ENCODE measurements at regions of chr11 and their contacts with region 1.

Region 1: DNA sequence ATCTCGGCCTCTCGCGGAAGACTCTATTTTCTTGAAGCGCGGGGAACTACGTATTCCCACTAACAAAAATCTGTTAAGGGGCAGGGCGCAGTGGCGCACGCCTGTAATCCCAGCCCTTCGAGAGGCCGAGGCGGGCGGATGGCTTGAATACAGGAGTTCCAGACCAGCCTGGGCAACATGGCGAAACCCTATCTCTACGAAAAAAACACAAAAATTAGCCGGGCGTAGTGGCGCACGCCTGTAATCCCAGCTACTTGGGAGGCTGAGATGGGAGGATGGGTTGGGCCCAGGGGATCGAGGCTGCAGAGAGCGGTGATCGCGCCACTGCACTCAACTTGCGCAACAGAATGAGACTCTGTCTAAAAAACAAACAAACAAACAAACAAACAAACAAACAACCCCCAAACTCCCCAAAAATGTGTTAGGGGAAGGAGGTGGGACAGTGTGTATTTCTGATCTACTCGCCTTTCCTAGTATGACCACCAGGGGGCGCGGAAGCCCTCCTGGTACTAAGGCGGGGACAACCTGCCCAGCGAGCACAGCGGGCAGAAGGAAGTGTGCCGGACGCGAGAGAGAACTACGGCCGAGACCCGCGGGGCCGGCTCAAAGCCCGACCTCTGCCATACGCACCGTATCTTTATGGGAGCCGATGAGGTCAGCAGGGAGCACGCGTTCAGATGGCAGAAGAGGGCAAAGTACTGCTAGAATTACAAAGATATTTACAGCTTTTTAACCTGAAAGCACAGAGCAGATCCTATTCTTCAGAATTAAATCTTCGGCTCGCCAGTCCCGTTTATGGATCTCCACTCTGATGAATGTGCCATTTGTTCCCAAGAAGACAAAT is 1.3 kb upstream of the STX3 start:
- DNase-seq: peak; percentile 90
- ATAC-seq: peak; percentile 26
- H3K4me3 ChIP-seq: peak overlapping the region; percentile 92
- H3K27ac ChIP-seq: no peak overlapping the region
- H3K4me1 ChIP-seq: peaks cover 20% of the 10 kb centered on the region
- H3K27me3 ChIP-seq: no peaks in the 10 kb centered on the region
- CTCF ChIP-seq: peak; percentile 96

Region 2: DNA sequence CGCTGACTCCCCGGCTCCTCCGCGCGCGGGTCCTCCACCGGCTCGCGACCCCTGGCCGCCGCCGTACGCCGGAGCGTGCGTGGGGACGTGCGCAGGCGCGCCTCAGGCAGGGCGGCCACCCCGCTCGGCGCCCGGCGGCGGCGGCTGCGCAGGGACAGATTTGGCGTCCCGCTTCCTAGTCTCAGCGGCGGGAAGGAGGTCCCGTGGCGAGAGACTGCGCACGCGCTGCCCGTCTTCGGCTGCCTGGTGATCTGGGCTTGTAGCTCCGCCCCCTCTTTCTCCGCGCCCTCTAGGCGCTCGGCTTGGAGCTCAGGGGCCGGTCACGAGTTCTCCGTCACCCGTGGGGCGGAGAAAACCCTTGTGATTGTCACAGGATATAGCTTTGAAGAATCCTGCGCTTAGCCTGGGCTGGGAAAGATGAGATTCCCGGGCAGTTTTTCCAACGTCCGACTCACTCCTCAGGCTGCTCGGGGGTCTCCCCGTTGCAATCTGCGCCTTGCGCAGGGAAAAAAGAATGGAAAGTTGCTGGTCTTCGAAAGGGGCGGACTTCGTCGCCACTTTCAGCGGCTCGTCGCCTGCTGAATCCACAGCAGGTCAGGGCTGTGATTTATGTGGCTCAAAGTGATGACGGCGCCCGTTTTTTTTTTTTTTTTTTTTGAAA is 84.8 kb before region 1 on chr11 and contains the start of gene PATL1:
- CTCF ChIA-PET with region 1: no interaction called
- POLR2A ChIA-PET with region 1: interaction called, 3 read pairs
- intact Hi-C with region 1: loop called (anchors 2 kb)
- DNase-seq: peak; percentile 99
- ATAC-seq: peak; percentile 95
- H3K4me3 ChIP-seq: peak within 1 kb of the TSS; percentile 77
- H3K27ac ChIP-seq: peak within 1 kb of the TSS; percentile 74
- H3K4me1 ChIP-seq: peaks cover 21% of the 10 kb centered on the region
- H3K27me3 ChIP-seq: no peaks in the 10 kb centered on the region
- CTCF ChIP-seq: no peak
- total RNA-seq, gene PATL1: 18.1 and 23.1 TPM in 2 replicates

Region 3: DNA sequence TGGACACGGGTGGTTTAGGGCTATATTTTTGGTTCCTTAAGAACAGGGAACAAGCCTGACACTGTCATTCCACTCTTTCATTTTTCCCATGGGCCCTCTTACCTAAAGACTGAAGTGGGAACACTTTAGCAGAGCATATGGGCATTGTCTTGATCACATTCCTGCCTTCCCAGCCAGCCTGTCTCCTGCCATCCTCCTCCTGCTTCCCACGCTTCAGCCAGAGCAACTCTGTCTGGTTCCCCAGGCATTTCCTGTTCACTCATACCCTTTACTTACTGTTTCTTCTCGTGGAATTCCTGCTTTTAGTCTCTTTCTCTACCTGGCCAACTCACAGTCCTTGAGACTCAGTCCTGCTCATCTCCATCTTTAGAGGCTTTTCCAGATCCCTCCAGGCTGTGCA is 33.9 kb after region 1 on chr11:
- CTCF ChIA-PET with region 1: interaction called, 4 read pairs
- POLR2A ChIA-PET with region 1: interaction called, 5 read pairs
- intact Hi-C with region 1: loop called (anchors 1 kb)
- DNase-seq: peak; percentile 23
- ATAC-seq: no peak
- H3K4me3 ChIP-seq: peak overlapping the region; percentile 27; the same call in 1 of the 2 replicates
- H3K27ac ChIP-seq: peak overlapping the region; percentile 91
- H3K4me1 ChIP-seq: peaks cover 31% of the 10 kb centered on the region
- H3K27me3 ChIP-seq: no peaks in the 10 kb centered on the region
- CTCF ChIP-seq: no peak

Region 4: GRCh38 chr11:59810189-59810910 is 56.5 kb after region 1 on chr11 and contains the start of gene MRPL16:
- CTCF ChIA-PET with region 1: interaction called, 3 read pairs
- POLR2A ChIA-PET with region 1: no interaction called
- intact Hi-C with region 1: loop called (anchors 2 kb)
- DNase-seq: peak; percentile 97
- ATAC-seq: peak; percentile 97
- H3K4me3 ChIP-seq: peak within 1 kb of the TSS; percentile 91
- H3K27ac ChIP-seq: peak within 1 kb of the TSS; percentile 57
- H3K4me1 ChIP-seq: peaks cover 20% of the 10 kb centered on the region
- H3K27me3 ChIP-seq: no peaks in the 10 kb centered on the region
- CTCF ChIP-seq: peak; percentile 49; the same call in 1 of the 2 replicates
- total RNA-seq, gene MRPL16: 111 and 123 TPM in 2 replicates